Adrenal gland (tissue), 19 donors: ENCODE measurements at regions of chr6 and their contacts with region 1.

Region 1: GRCh38 chr6:159862103-159862502 is 28.7 kb upstream of the MAS1 start:
- DNase-seq: no peak
- H3K4me3 ChIP-seq: no peak overlapping the region
- H3K27ac ChIP-seq: no peak overlapping the region
- H3K4me1 ChIP-seq: no peaks in the 10 kb centered on the region
- H3K27me3 ChIP-seq: peaks cover 11% of the 10 kb centered on the region
- CTCF ChIP-seq: no peak
- POLR2A ChIP-seq: no peak

Region 2: GRCh38 chr6:159941286-159942113 is 79.4 kb after region 1 on chr6:
- intact Hi-C with region 1: loop called (anchors 5 to 10 kb)
- DNase-seq: peak in 1 of 7 donors; percentile 6
- H3K4me3 ChIP-seq: no peak overlapping the region
- H3K27ac ChIP-seq: no peak overlapping the region
- H3K4me1 ChIP-seq: peaks cover 4 to 23% of the 10 kb centered on the region in 2 donors
- H3K27me3 ChIP-seq: no peaks in the 10 kb centered on the region
- CTCF ChIP-seq: peak in 5 of 6 experiments; percentile 13 to 50 (median 40)
- POLR2A ChIP-seq: no peak

Region 3: DNA sequence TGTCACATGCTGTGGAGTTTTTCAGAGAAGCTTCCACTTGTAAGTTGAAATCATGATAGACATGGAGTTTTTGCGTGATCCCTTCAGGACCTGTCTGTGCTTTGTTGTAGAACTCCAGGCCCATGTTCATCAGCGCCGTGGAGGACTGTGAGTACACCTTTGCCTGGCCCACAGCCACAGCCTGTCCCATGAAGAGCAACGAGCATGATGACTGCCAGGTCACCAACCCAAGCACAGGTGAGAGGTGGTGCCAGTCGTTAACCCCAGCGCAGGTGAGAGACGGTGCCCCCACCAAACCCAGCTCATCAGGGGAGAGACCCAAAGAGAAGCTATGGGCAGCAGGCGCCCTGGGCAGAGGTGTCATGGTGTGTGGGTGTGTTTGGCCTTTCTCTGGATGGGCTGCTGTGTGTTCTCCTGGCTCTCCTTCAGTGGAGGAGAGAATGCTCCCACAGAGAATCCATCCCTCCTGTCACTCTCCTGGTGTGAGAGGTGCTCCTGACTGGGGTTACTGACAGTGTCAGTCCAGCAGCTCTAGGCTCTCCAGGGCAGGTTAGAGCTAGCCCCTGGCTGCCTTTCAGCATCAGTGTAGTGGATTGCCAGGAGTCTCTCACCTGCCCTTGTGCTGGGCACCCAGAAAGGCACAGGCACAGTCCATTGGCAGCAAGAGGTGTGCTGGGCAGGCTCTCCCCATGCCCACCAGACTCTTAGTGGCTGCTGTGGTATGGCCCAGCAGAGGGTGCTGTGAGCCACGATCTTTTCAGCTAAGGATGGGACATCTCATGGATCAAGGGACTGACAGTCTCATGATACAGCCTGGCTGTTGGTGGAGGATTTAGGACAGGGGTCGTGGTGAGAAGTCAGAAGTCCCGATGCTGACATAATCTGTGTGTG is 209.9 kb after region 1 on chr6:
- intact Hi-C with region 1: loop called in 1 of 2 experiments (anchors 10 kb)
- DNase-seq: no peak
- H3K4me3 ChIP-seq: no peak overlapping the region
- H3K27ac ChIP-seq: no peak overlapping the region
- H3K4me1 ChIP-seq: no peaks in the 10 kb centered on the region
- H3K27me3 ChIP-seq: no peaks in the 10 kb centered on the region
- CTCF ChIP-seq: peak in 1 of 6 experiments; percentile 10
- POLR2A ChIP-seq: no peak

Region 4: DNA sequence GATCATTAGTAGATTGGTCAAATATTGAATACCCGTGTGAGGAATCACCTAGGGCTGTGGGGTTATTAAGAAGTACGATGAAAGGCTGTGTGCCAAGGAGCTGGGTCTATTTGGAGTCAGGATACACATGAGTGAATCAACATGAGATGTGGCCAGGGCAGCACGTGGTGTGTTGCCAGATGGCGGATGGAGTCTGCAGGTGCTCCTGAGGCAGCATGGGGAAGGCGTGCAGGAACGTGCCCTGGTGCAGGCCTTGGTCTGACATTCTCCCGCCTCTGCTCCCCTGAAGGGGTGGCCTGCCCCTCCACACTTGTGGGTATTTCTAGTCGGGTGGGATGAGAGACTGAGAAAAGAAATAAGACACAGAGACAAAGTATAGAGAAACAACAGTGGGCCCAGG is 220.5 kb after region 1 on chr6:
- intact Hi-C with region 1: loop called (anchors 5 to 10 kb)
- DNase-seq: no peak
- H3K4me3 ChIP-seq: no peak overlapping the region
- H3K27ac ChIP-seq: no peak overlapping the region
- H3K4me1 ChIP-seq: no peaks in the 10 kb centered on the region
- H3K27me3 ChIP-seq: no peaks in the 10 kb centered on the region
- CTCF ChIP-seq: no peak
- POLR2A ChIP-seq: no peak